Calu3 (cell line): ENCODE measurements at regions of chr6 and their contacts with region 1.

Region 1: DNA sequence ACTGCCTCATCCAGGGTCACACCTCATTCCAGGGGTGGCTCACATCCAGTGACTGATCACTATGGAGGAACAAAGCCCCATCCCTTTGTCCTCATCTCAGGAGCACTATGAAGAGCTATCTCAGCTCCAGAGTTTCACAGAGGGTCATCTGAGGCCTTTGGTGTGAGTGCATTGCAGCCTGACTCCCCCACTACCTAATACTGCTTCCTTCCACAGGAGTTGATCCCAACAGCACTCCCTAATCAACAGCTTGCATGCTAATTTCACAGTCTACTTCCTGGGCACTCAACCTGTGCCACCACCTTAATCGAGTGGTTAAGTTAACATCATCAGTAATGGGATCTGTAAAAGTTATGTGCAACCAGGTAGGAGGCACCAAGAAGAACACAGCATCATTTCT is 37.7 kb downstream of the F13A1 start:
- DNase-seq: no peak
- H3K4me3 Mint-ChIP-seq: no peak overlapping the region
- H3K27ac Mint-ChIP-seq: no peak overlapping the region
- H3K4me1 Mint-ChIP-seq: no peaks in the 10 kb centered on the region
- H3K27me3 Mint-ChIP-seq: peaks cover 27% of the 10 kb centered on the region
- CTCF ChIP-seq: no peak

Region 2: DNA sequence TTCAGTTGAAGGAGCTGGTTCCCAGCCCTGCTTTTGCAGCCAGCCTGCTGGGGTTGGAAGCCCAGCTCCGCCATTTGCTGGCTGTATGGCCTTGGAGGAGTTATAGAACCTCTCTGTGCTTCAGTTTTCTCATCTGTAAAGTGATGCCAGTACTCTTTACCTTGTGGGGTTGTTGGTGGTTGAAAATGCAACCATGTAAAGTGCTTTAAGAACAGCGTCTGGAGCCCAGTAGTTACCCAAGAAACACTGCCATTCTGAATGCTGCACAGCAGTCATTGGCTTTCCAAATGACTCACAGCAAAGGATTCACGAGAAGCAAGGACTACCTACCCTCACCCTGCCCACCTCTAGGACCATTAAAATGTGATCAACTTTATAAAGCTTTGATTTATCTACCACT is 116.7 kb before region 1 on chr6:
- CTCF ChIA-PET with region 1: no interaction called
- intact Hi-C with region 1: no loop called
- DNase-seq: no peak
- H3K4me3 Mint-ChIP-seq: no peak overlapping the region
- H3K27ac Mint-ChIP-seq: no peak overlapping the region
- H3K4me1 Mint-ChIP-seq: no peaks in the 10 kb centered on the region
- H3K27me3 Mint-ChIP-seq: peaks cover 21% of the 10 kb centered on the region
- CTCF ChIP-seq: no peak

Region 3: DNA sequence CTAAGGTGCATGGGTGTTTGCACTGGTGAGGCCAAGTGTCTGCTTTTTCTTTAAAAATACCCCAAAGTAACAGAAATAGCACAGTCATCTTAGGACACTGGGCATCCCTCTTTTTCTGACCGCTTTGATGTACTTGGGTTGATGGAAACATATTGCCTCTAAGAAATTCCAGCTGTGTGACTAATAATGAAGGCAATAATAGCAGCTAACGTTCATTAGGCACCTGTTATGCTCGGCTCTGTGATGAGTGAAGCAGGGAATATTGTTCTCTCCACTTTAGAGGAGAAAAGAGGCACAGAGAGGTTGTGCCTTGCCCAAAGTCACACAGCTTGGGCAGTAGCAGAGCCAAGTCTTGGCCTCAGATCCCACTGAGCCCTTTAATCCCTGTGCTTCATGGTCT is 63.0 kb before region 1 on chr6:
- CTCF ChIA-PET with region 1: interaction called, 10 read pairs
- intact Hi-C with region 1: no loop called
- DNase-seq: no peak
- H3K4me3 Mint-ChIP-seq: no peak overlapping the region
- H3K27ac Mint-ChIP-seq: no peak overlapping the region
- H3K4me1 Mint-ChIP-seq: no peaks in the 10 kb centered on the region
- H3K27me3 Mint-ChIP-seq: no peaks in the 10 kb centered on the region
- CTCF ChIP-seq: no peak